ENCODE measurements at regions of chr5 and their contacts with region 1.

Region 1: DNA sequence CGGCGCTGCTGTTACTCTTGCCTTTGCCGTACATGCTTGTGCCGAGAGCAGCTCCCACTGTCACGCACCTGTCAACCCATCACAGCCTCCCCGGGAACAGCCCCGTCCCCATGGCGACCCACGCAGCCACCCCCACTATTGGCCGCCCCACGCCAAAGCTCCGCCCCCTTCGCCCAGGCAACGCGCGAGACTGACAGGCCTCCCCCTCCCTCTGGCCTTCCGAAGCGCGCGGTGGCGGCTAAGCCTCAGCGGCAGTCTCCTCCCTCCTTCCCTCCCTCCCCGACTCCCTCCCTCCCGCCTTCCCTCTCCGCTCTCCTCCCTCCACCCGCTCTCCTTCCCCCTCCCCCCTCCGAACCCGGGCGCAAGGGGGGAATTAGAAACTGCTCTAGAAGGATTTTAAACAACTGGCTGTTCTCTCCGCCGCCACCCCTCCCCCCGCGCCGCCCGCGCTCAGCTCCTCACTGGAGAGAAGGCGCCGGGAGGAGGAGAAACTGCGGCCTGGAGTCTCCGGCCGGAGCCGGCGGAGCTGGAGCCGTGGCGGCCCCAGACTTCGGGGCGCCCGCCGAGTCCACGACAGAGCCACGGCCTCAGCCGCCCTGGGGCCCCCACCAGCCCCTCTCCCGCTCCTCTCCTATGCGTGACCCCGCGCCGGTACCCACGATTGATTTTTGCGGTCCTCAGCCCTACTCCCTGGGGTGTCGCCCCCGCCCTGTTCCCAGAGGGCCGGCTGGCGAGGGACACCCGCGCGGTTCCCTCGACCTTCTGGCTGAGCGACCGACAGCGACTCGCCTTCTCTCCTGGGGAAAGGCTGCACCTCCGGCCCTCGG is at the start of gene SSBP2:
- DNase-seq: peak; percentile 98
- H3K4me3 ChIP-seq: peak within 1 kb of the TSS; percentile 91
- H3K27ac ChIP-seq: peak within 1 kb of the TSS; percentile 98
- H3K4me1 ChIP-seq: peaks cover 44% of the 10 kb centered on the region
- CTCF ChIP-seq: 0 out of 2 replicates have a peak, but pooled peaks have one; percentile 17
- total RNA-seq, gene SSBP2: 131 and 172 TPM in 2 replicates

Region 2: DNA sequence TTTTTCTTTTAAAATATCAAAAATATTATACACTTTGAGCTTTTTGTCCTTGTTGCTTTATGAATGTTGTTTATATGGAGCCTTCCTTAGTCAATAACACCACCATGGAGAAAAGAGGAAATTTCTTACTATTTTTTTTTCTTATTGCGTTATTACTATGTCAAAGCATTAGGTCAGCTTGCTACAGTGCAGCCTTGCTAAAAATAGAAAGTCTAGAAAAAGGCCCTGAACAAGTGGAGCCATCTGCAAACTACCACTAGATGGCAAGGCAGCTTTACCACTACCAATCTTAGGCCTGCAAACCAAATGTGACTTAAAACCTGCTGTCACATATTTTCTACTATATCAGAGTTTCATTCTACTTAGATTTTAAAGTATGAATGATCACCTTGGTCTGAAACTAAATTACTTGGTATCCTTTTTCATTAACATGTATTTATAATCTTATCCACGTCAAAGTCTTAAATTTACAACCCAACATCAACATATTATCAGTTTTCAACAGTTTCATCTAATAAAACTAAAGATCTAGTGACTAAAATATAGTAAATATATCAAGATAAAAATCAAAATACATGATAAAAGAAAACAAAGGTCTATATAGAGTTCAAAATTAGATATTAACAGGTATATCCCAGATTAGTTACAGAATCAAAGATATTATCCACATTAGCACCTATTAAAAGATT is 244.2 kb before region 1 on chr5:
- CTCF ChIA-PET with region 1: interaction called, 3 read pairs
- POLR2A ChIA-PET with region 1: interaction called, 4 read pairs
- intact Hi-C with region 1: loop called (anchors 1 kb)
- DNase-seq: peak; percentile 92
- H3K4me3 ChIP-seq: no peak overlapping the region
- H3K27ac ChIP-seq: peak overlapping the region; percentile 40
- H3K4me1 ChIP-seq: peaks cover 37% of the 10 kb centered on the region
- CTCF ChIP-seq: peak; percentile 96

Region 3: DNA sequence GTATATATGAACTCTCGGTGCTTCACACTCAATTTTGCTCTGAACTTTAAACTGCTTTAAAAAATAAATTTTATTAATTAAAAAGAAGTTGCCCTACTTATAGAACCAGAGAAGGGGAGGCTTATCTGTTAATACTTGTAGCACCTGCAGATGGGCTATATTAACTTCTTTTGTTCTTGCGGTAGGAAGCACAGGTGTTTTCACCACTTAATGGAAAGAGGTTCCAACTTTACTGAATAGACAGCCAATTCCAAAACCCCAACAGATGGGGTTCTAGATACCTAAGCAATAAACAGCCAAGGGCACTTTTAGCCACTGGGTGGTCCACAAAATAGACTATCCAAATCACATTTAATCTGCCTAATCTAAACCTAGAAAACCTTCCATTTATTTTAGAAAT is 65.8 kb before region 1 on chr5:
- CTCF ChIA-PET with region 1: no interaction called
- POLR2A ChIA-PET with region 1: no interaction called
- intact Hi-C with region 1: loop called (anchors 2 kb)
- DNase-seq: peak; percentile 60
- H3K4me3 ChIP-seq: no peak overlapping the region
- H3K27ac ChIP-seq: peak overlapping the region; percentile 48
- H3K4me1 ChIP-seq: peaks cover 23% of the 10 kb centered on the region
- CTCF ChIP-seq: no peak

Region 4: GRCh38 chr5:81787474-81788242 is 36.4 kb after region 1 on chr5:
- CTCF ChIA-PET with region 1: no interaction called
- POLR2A ChIA-PET with region 1: interaction called, 6 read pairs
- intact Hi-C with region 1: loop called (anchors 1 kb)
- DNase-seq: peak; percentile 80
- H3K4me3 ChIP-seq: peak overlapping the region; percentile 20
- H3K27ac ChIP-seq: peak overlapping the region; percentile 26
- H3K4me1 ChIP-seq: peaks cover 22% of the 10 kb centered on the region
- CTCF ChIP-seq: no peak

Region 5: DNA sequence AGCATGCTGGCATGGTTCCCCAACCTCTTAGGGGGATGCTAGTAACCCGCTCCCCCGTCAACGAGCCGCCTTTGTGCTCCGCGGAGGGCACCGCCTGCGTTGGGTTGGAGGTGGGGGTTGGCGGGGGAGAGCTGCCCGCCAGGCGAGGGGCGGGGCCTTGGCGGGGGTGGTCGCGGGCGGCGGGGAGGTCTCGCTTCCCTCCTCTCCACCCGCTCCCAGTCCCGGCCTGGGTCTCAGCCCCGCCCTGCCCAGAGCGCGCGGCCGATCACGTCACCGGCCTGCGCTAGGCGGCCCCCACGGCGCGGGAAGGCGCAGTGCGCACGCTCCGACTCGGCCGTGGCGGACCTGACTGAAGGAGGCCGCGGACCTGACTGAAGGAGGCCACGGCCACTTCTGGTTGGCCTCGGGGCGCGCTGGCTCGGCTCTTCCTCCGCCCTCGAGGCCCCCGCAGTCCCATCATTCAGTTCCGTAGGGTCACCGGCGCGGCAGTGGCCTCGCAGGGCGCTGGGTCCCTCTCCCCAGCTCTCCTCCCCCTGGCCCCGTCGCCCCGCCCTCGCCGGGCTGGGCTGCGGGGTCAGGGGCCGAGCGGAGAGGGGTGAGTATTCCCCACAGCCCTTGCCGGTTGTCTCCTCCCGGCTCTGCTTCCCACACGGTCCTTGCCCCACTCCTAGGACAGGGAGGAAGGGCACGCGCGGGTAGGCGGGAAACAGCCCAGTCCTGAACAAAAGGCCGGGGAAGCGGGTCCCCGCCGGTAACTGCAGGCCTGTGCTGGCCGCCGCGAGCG is 220.7 kb after region 1 on chr5 and contains the start of gene ATG10:
- CTCF ChIA-PET with region 1: no interaction called
- POLR2A ChIA-PET with region 1: interaction called, 4 read pairs
- intact Hi-C with region 1: loop called (anchors 1 kb)
- DNase-seq: peak; percentile 92
- H3K4me3 ChIP-seq: peak within 1 kb of the TSS; percentile 85
- H3K27ac ChIP-seq: peak within 1 kb of the TSS; percentile 56
- H3K4me1 ChIP-seq: peaks cover 19% of the 10 kb centered on the region
- CTCF ChIP-seq: no peak
- total RNA-seq, gene ATG10: 5.4 and 11.8 TPM in 2 replicates

Region 6: DNA sequence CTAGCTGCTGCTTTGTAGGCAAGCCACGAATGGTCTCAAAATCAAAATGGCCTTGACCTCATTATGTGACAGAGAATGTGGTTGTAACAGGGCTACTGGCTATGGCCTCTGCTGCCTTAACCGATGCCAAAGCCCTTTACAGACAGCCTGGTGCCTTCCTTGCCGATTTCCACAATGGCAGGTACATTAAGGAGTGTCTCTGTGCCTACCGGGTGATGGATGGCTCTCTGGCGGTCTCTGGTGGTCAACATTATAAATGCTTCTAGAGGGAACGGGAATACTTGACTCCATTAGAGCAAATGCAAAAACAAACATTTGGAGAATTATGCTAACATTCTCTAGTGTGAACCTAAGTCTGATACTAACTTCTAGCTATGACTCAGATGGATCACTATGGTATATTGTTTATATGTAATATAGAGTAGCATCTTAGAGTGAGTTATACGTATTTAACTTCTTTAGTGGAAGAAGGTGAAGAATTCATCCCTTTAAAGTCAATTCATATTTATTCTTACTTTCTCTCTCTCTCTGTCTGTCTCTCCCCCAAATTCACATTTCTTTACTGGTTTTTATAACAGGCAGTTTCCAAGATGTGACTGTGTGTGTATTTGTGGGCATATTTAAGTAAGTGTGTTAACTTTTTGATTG is 474.4 kb after region 1 on chr5:
- CTCF ChIA-PET with region 1: no interaction called
- POLR2A ChIA-PET with region 1: no interaction called
- intact Hi-C with region 1: loop called (anchors 10 kb)
- DNase-seq: peak; percentile 65
- H3K4me3 ChIP-seq: no peak overlapping the region
- H3K27ac ChIP-seq: no peak overlapping the region
- H3K4me1 ChIP-seq: no peaks in the 10 kb centered on the region
- CTCF ChIP-seq: peak; percentile 95

Measured in OCI-LY7 (cell line).